ENCODE measurements at regions of chr16 and their contacts with region 1.

Region 1: GRCh38 chr16:53130159-53131049 is 75.6 kb downstream of the CHD9 start:
- DNase-seq: peak; percentile 91
- ATAC-seq: peak; percentile 90
- H3K4me3 ChIP-seq: peak overlapping the region; percentile 76 to 96 (median 84)
- H3K27ac ChIP-seq: peak overlapping the region; percentile 96
- H3K4me1 ChIP-seq: peaks cover 42% of the 10 kb centered on the region
- H3K27me3 ChIP-seq: no peaks in the 10 kb centered on the region; a peak in 2 of 5 replicates
- CTCF ChIP-seq: peak; percentile 74
- EP300 ChIP-seq: peak in 1 of 2 experiments; percentile 29; a peak in 1 of 4 replicates
- POLR2A ChIP-seq: peak; percentile 90 to 96
- RAD21 ChIP-seq: peak; percentile 99

Region 2: DNA sequence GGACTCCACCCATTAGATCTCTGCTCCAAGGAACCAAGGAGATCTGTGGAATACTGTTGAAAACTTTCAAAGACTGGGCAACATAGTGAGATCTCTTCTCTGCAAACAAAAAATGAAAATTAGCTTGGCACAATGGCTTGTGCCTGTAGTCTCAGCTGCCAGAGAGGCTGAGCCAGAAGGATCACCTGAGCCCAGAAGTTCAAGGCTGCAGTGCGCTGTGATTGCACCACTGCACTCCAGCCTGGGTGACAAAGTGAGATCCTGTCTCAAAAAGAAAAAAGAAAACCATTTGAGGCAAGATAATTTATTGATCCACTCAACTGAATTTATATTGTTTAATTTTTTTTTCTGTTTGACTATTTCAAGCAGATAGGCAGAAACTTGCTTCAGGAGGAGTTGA is 132.5 kb before region 1 on chr16:
- CTCF ChIA-PET with region 1: no interaction called
- POLR2A ChIA-PET with region 1: no interaction called
- in situ Hi-C with region 1: no loop called
- intact Hi-C with region 1: no loop called
- DNase-seq: no peak
- ATAC-seq: no peak; the same call in 2 of the 3 replicates
- H3K4me3 ChIP-seq: no peak overlapping the region
- H3K27ac ChIP-seq: no peak overlapping the region
- H3K4me1 ChIP-seq: no peaks in the 10 kb centered on the region
- H3K27me3 ChIP-seq: peaks cover 0 to 3% of the 10 kb centered on the region in 2 experiments; a peak in 1 of 5 replicates
- CTCF ChIP-seq: no peak
- EP300 ChIP-seq: no peak
- POLR2A ChIP-seq: no peak
- RAD21 ChIP-seq: no peak

Region 3: DNA sequence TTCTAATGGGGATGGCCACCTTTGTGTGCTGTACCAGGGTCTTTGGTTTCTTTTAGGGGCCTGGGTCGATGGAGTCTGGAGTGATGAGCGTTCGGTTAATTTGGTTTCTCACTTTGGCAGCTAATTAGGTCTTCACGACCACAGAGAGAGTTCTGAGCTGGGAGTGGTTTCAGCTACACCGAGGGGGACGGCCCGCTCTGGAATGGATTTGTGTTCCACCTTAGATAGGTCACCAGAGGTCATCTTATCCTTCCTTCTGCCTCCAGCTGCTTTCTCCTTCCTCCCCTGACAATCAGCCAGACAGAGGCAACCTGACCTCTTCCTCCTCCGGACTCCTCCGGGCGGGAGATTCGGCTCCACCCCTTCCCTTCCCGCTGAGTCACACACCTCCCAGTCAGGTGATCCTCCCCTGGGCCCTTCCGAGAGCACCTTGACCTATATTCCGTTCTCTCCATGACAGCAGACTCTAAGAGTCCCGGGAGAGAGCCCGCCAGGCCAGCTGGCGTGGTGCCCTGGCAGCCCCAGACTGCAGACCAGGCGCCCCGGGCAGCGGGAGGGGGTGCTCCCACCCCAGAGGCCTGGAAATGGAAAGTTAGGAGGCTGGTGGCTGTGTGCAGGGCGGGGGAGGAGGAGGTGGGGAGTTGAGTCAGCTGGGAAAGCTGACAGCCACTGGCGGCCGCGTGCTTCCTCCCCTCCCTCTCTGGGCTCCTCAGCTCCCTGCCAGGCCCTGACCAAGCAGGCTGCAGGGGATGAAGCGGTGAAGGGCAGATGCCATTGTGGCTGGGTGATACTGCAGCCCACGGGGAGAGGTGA is 30.9 kb before region 1 on chr16:
- CTCF ChIA-PET with region 1: no interaction called
- POLR2A ChIA-PET with region 1: interaction called, 35 read pairs
- in situ Hi-C with region 1: no loop called
- intact Hi-C with region 1: loop called (anchors 1 kb)
- DNase-seq: peak; percentile 88
- ATAC-seq: peak; percentile 94
- H3K4me3 ChIP-seq: peak overlapping the region; percentile 57 to 74 (median 67)
- H3K27ac ChIP-seq: peak overlapping the region; percentile 78
- H3K4me1 ChIP-seq: peaks cover 41% of the 10 kb centered on the region
- H3K27me3 ChIP-seq: no peaks in the 10 kb centered on the region; a peak in 1 of 5 replicates
- CTCF ChIP-seq: no peak
- EP300 ChIP-seq: peak in 1 of 2 experiments; percentile 31; a peak in 1 of 4 replicates
- POLR2A ChIP-seq: peak; percentile 61 to 83
- RAD21 ChIP-seq: 0 out of 2 replicates have a peak, but pooled peaks have one; percentile 50

Region 4: DNA sequence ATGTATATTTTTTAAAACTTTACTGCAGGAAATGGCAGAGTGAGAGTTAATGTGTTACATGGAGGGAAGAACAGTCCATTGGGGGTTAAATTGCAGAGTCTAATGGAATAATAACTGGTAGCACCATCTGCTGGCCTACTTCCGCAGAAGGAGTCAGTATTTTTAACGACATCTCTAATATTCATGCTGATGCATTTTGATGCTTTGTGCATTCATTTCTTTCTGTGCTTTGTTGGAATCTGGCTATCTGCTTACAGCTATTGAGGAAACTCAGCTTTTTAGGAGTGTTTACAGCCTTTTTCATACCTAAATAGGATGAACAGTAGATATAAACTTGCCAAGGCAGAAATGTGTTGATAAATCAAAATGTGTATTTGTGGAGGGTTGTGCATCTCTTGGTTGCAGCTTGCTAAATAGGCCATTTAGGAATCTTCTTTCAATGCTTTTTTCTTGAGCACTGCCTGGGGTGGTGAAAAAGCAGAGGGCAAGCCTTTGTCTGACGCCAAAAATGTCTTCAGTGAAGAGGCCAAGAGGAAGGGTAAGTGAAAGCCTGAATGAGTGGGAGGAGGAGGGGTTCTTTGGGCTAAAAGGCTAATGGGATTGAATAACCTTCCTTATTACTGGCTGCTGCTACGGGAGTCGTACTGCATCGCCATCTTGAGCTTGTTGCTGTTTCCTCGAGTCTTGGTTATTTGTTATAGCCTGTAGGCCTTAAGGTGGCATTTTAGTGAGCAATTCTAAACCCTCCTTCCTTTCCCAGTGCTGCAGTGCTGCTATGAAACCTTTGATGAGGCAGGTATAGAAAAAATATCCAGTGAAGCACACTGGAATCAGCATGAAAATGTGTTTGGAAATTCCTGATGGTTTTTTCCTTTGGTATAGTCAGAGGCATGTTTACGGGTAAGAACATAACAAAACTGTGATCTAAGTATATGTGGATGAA is 77.7 kb after region 1 on chr16:
- CTCF ChIA-PET with region 1: interaction called, 4 read pairs
- POLR2A ChIA-PET with region 1: no interaction called
- in situ Hi-C with region 1: no loop called
- intact Hi-C with region 1: loop called (anchors 1 kb)
- DNase-seq: peak; percentile 72
- ATAC-seq: peak; percentile 92
- H3K4me3 ChIP-seq: no peak overlapping the region
- H3K27ac ChIP-seq: peak overlapping the region; percentile 14
- H3K4me1 ChIP-seq: no peaks in the 10 kb centered on the region
- H3K27me3 ChIP-seq: no peaks in the 10 kb centered on the region
- CTCF ChIP-seq: peak; percentile 63
- EP300 ChIP-seq: no peak
- POLR2A ChIP-seq: no peak
- RAD21 ChIP-seq: peak; percentile 58; the same call in 1 of the 2 replicates

Region 5: DNA sequence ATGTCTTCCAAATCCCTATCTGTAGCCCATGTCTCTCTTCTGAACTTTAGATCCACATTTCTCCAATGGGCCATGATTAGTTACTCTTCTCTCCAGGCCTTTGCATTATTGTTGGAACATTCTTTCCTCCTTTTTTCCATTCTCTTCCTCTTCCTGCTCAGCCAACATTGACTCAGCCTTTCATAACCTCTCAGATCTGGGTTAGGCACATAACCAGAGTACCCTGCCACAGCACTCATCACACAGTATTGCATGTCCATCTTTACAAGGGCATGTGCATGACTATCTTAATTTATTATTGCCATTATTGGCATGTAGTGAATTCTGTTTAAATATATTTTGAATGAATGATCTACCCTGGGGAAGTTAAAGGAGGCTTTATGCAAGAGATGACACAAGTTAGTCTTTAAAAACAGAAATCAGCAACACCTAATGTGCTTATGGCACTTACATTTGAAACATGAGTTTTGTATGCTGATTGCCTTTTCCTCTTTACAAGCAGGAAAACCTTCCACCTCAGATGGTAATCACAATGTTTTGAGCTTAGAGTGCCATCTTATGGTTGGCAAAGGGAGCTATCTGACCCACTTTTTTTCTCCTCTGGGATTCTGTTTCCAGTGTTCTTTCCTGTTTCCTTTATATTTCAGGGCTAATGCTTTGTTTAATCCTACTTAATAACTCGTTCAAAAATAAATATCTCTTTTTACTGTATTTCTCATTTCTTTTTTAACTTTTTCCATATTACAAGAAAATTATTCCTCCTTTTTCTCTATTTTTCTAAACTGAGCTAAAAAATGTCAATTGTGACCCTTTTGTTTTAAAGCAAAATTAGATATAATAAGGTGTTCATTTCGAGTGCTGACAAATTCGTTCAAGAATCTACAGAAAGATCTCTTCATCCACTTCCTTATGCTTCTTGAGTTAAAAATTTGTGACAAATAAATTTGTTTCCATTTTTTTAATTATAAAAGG is 152.9 kb after region 1 on chr16:
- CTCF ChIA-PET with region 1: interaction called, 3 read pairs
- POLR2A ChIA-PET with region 1: no interaction called
- in situ Hi-C with region 1: no loop called
- intact Hi-C with region 1: loop called (anchors 2 kb)
- DNase-seq: peak; percentile 55
- ATAC-seq: peak; percentile 81
- H3K4me3 ChIP-seq: no peak overlapping the region
- H3K27ac ChIP-seq: no peak overlapping the region
- H3K4me1 ChIP-seq: no peaks in the 10 kb centered on the region
- H3K27me3 ChIP-seq: no peaks in the 10 kb centered on the region
- CTCF ChIP-seq: peak; percentile 75
- EP300 ChIP-seq: no peak
- POLR2A ChIP-seq: no peak
- RAD21 ChIP-seq: 0 out of 2 replicates have a peak, but pooled peaks have one; percentile 40

Measured in HepG2 (cell line).